Activated CD4-positive, alpha-beta T cell treated with anti-CD3 and anti-CD28 coated beads, Interleukin-2, amount 10 ng/mL, durations not matched to agents 24 days and 14 days (primary cell): ENCODE measurements at regions of chr4 and their contacts with region 1.

Region 1: DNA sequence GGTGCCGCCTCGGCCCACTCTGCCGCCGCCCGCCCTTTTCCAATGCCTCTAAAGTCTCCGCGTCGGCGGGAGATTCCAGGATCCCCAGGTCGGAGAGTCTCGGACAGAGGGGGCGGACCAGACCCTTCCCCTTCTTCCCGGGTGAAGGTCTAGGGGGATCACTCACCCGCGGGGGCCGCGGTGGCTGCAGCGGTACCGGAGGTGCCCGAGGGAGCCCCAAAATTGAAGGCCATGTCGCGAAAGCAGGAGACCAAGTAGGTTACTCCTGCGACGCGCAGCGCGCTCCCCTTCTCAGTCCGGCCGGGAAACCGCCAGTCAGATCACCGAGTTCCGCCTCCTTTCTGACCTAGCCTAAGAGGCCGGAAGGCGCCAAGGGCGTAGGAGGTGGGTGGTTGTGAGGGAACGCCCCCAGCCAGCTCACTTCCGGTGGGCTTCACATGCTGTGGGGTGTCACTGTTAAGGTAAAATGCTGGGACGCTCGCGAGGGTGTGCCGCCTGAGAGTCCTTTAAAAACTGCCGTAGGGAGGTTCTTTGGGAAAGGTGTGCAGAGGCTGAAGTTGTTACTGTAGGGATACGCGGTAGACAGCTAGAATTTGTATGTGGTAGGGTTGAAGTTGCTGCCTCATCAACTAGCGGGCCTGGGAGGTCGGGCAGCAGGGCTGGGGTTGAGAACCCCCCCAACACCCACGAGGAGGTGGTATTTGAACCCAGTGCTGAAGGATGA is at the start of gene NUP54:
- DNase-seq: peak; percentile 99
- H3K4me3 Mint-ChIP-seq: peak within 1 kb of the TSS; percentile 95
- H3K27ac Mint-ChIP-seq: peak within 1 kb of the TSS; percentile 92
- H3K4me1 Mint-ChIP-seq: peaks cover 29% of the 10 kb centered on the region
- H3K27me3 Mint-ChIP-seq: peaks cover 1% of the 10 kb centered on the region
- total RNA-seq, gene NUP54: 72.6 and 75.1 TPM in 2 replicates

Region 2: GRCh38 chr4:75673027-75673958 is 475.0 kb before region 1 on chr4 and contains the start of gene G3BP2:
- intact Hi-C with region 1: loop called (anchors 2 kb)
- DNase-seq: peak; percentile 99
- H3K4me3 Mint-ChIP-seq: peak within 1 kb of the TSS; percentile 98
- H3K27ac Mint-ChIP-seq: peak within 1 kb of the TSS; percentile 100
- H3K4me1 Mint-ChIP-seq: peaks cover 44% of the 10 kb centered on the region
- H3K27me3 Mint-ChIP-seq: no peaks in the 10 kb centered on the region
- total RNA-seq, gene G3BP2: 135 and 146 TPM in 2 replicates

Region 3: GRCh38 chr4:75989846-75990528 is 158.3 kb before region 1 on chr4:
- intact Hi-C with region 1: loop called (anchors 1 kb)
- DNase-seq: no peak
- H3K4me3 Mint-ChIP-seq: peak overlapping the region; percentile 89
- H3K27ac Mint-ChIP-seq: peak overlapping the region; percentile 81
- H3K4me1 Mint-ChIP-seq: peaks cover 31% of the 10 kb centered on the region
- H3K27me3 Mint-ChIP-seq: peaks cover 9% of the 10 kb centered on the region

Region 4: DNA sequence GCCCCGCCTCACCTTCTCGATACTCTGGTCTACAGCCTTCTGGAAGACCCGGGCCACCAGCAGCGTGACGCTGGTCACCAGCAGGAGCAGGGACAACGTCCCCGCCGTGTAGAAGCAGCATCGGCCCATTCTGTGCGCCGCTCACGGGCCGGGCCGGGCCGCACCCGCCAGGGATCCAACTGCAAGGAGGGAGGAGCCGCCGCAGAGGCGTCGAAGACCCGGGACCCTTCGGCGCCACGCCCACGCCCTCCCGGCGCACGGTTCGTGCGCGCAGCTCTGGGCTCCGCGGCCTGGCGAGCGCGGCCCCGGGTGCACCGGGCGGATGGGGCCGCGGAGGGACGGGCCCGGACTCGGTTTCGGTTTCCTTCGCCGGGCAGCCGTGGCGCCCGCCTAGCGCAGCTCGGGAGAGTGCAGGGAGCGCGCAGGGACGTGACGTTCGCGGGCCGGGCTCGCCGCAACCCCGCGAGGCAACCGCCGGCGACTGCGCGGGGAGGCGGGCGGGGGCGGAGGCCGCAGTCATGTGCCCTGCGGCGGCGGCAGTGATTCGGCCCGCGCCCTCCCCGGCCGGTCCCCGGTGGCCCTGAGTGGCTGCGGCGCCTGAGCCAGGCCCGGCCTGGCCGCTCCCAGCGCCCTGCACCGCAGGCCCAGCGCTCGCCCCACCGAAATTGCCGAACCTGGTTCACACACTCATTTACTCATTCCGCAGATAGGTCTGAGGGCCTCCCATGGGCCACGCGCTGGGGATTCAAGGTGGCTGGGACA is 65.3 kb after region 1 on chr4 and contains the start of gene SCARB2:
- intact Hi-C with region 1: loop called (anchors 2 kb)
- DNase-seq: peak; percentile 93
- H3K4me3 Mint-ChIP-seq: peak within 1 kb of the TSS; percentile 86
- H3K27ac Mint-ChIP-seq: peak within 1 kb of the TSS; percentile 83
- H3K4me1 Mint-ChIP-seq: peaks cover 23% of the 10 kb centered on the region
- H3K27me3 Mint-ChIP-seq: peaks cover 32% of the 10 kb centered on the region
- total RNA-seq, gene SCARB2: 1.5 and 1.7 TPM in 2 replicates